ENCODE measurements at regions of chr2 and their contacts with region 1.

Region 1: DNA sequence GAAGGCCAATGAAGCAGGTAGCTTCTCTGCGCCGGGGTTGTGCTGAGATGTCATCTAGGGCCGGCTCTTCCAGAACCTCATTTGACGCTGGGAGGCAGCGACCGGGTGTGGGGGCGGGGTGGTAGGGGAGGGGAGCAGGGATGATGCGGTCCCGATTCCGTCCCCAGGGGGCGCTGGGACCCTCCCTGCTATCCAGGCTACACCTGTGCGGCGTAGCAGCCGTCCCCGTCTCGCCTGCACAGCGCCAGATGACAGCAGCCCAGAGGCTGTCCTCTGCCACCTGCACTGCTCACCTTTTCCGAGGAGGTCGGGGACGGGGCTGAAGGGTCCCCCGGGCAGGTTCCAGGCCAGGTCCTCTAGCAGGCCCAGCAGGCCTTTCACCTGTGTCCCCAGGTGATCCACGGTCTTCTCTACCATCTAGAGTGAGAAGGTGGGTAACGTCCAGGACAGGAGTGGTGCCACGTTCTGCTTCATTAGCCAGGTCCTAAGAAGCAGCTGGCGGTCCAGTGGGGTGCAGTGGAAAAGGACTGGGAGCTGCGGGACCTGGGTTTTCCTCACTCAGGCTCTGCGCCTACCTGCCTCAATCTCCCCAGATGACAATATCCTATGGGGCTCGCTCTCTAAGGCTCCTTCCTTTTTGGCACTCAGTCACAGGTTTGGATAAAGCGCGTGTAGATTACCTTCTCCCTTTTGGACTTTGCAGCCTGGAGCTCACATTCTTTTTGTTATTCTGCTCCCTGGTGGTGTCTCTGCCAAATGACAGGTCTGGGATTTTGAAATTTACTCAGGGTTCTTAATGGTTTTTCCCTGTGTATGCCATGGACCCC is 56.0 kb upstream of the RAB6C start:
- DNase-seq: peak; percentile 79
- H3K4me3 ChIP-seq: peak overlapping the region in 2 of 4 donors; percentile 9 to 14
- H3K27ac ChIP-seq: no peak overlapping the region
- H3K4me1 ChIP-seq: peaks cover 6 to 11% (median 10%) of the 10 kb centered on the region in 4 donors
- H3K27me3 ChIP-seq: peaks cover 0 to 43% (median 8%) of the 10 kb centered on the region in 4 donors
- CTCF ChIP-seq: peak; percentile 23 to 56 (median 47)
- EP300 ChIP-seq: no peak
- POLR2A ChIP-seq: no peak

Region 2: GRCh38 chr2:129758784-129759471 is 164.6 kb before region 1 on chr2:
- intact Hi-C with region 1: loop called (anchors 10 kb)
- DNase-seq: no peak
- H3K4me3 ChIP-seq: peak overlapping the region; percentile 44 to 55 (median 49)
- H3K27ac ChIP-seq: peak overlapping the region; percentile 34 to 62 (median 45)
- H3K4me1 ChIP-seq: peaks cover 0 to 22% (median 19%) of the 10 kb centered on the region in 4 donors
- H3K27me3 ChIP-seq: no peaks in the 10 kb centered on the region
- CTCF ChIP-seq: no peak
- EP300 ChIP-seq: no peak
- POLR2A ChIP-seq: no peak